Aorta (tissue), 5 donors: ENCODE measurements at regions of chr1 and their contacts with region 1.

Region 1: GRCh38 chr1:47710329-47711071 is 272.7 kb downstream of the FOXD2 start:
- DNase-seq: peak; percentile 78 to 94
- ATAC-seq: peak; percentile 92
- H3K4me3 ChIP-seq: no peak overlapping the region
- H3K27ac ChIP-seq: no peak overlapping the region
- H3K4me1 ChIP-seq: no peaks in the 10 kb centered on the region
- H3K27me3 ChIP-seq: no peaks in the 10 kb centered on the region

Region 2: DNA sequence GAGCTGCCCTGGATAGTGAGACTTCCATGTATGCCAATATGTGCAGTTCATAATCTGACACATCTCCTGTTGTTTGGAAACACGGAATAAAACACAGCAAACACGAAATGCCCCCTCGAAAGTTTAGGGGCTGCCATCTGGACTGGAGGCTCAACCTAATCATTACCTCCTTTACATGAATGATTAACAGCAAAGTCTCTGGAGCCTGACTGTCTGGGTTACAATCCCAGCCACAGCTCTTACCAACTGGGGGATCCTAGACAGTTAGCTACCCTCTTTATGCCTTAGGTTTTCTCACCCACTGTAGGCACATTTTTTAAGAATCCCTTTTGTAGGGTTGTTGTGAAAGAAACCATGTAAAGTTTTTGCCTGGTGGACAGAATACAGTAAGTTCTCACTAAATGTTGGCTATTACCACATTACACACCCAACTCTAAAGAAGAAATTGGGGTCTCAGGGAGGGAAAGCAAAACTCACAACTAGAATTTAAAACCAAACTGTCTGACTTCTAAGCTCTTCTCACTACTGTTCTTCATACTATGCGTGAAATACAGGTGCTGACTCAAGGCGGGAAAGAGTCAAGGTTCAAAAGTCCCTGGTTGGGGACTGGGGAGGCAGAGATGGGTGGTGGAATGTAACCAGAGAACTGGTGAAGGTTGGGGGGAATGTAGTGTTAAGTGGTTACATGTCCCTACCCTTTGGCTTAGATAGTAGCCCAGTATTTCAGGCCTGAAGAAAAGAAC is 549.0 kb before region 1 on chr1:
- intact Hi-C with region 1: no loop called
- DNase-seq: no peak
- ATAC-seq: no peak
- H3K4me3 ChIP-seq: no peak overlapping the region
- H3K27ac ChIP-seq: no peak overlapping the region
- H3K4me1 ChIP-seq: no peaks in the 10 kb centered on the region
- H3K27me3 ChIP-seq: peaks cover 0 to 2% of the 10 kb centered on the region in 2 donors

Region 3: GRCh38 chr1:47179017-47179987 is 531.2 kb before region 1 on chr1:
- intact Hi-C with region 1: loop called (anchors 5 to 10 kb)
- DNase-seq: peak; percentile 95 to 97
- ATAC-seq: peak; percentile 87
- H3K4me3 ChIP-seq: peak overlapping the region in 1 of 2 donors; percentile 17
- H3K27ac ChIP-seq: no peak overlapping the region
- H3K4me1 ChIP-seq: no peaks in the 10 kb centered on the region
- H3K27me3 ChIP-seq: no peaks in the 10 kb centered on the region

Region 4: DNA sequence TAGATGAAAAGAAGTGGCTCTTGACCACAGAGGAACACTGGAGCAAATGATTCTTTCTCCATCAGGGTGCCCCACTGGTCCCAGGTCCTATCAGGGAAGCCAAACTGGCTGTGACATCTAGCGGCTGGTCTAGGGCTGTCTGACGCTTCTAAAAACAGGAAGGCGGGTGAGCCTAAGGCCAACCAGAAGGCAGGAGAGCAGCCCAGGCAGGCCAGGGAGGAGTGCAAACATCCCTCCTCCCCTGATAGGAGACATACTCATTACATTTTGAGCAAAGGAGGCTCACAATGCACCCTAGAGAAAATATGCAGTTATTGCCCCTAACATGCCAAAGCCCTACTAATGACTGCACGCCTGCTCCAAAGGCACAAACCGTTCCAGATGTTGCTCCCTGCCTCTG is 304.8 kb before region 1 on chr1:
- intact Hi-C with region 1: no loop called
- DNase-seq: no peak
- ATAC-seq: no peak
- H3K4me3 ChIP-seq: no peak overlapping the region
- H3K27ac ChIP-seq: no peak overlapping the region
- H3K4me1 ChIP-seq: no peaks in the 10 kb centered on the region
- H3K27me3 ChIP-seq: no peaks in the 10 kb centered on the region

Region 5: DNA sequence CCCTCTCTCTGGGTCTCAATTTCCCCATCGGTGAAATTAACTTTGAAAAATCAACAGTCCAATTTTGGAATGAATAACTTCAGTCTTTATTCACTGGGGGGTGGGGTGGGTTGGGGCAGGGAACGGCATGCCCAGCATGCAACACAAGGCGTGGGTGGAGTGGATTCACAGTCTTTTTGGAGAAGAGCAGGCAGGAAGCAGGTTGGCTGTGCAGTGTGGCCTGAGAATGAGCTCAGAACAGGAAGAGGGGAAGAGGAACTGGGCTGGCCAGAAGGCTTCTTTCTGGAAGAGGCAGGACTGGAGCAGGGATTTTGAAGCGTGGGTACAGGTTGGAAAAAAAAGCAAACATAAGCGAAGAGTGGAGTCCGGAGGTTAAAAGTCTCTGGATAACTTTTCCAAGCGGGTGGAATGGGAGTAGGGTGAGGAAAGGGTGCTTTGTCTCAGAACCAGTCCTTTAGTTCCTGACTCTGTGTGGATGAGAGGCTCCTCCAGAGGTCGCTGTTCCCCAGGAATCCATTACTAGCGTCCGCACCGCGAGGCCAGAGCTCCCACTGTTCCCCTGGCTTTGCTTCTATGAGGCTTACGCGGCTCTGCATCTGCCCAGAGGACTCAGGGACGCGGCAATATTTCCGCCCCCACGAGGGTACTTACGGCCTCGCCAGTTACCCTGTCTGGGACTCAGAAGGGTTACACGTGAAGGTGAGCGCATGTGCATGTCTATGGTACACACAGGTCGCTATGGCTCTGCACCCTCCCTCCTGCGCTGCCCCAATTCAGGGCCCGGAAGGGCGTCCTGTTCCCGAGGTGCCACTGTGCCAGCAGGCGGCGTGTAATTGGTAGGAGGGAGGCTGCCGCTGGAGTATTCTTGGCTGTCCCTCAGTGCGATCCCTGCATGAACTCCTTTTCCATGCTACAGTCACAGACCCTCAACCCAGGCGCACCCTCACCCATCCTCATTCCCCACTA is 278.1 kb before region 1 on chr1:
- intact Hi-C with region 1: loop called (anchors 1 kb)
- DNase-seq: peak; percentile 87 to 91
- ATAC-seq: peak; percentile 75
- H3K4me3 ChIP-seq: no peak overlapping the region
- H3K27ac ChIP-seq: no peak overlapping the region
- H3K4me1 ChIP-seq: no peaks in the 10 kb centered on the region
- H3K27me3 ChIP-seq: no peaks in the 10 kb centered on the region

Region 6: DNA sequence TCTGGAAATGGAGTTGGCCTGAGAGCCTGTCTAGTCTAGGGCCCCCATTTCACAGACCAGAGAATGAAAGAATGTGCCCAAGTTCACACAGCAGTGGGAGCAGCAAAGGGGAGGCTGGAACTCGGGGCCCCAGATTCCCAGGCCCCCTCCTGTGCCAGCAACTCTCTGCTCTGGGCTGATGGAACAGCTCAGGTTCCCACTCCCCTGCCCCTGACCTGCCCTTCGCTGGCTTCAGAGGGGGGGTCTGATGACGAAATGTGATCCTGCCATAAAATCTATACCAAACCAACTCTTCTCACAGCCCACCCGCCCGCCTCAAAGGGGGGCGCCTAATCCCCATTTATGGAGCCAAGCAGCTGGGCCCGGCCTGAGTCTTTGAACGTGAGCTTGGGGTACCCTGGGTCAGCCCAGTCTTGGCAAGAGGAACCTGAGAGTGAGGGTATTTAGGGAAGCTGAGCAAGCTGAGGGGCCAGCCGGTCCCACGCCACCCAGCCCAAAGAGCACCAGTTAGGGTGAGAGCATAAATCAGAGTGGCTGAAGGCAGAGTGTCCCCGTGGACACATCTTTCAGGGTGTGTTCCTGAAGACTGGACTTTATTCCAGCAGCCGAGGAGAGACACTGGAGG is 207.6 kb before region 1 on chr1:
- intact Hi-C with region 1: loop called (anchors 2 to 5 kb)
- DNase-seq: no peak
- ATAC-seq: no peak
- H3K4me3 ChIP-seq: no peak overlapping the region
- H3K27ac ChIP-seq: no peak overlapping the region
- H3K4me1 ChIP-seq: no peaks in the 10 kb centered on the region
- H3K27me3 ChIP-seq: no peaks in the 10 kb centered on the region

Region 7: GRCh38 chr1:47521034-47521881 is 189.2 kb before region 1 on chr1:
- intact Hi-C with region 1: loop called (anchors 5 kb)
- DNase-seq: peak; percentile 82 to 88
- ATAC-seq: peak; percentile 78
- H3K4me3 ChIP-seq: no peak overlapping the region
- H3K27ac ChIP-seq: peak overlapping the region in 1 of 2 donors; percentile 38
- H3K4me1 ChIP-seq: peaks cover 0 to 3% of the 10 kb centered on the region in 2 donors
- H3K27me3 ChIP-seq: no peaks in the 10 kb centered on the region

Region 8: GRCh38 chr1:47656719-47657685 is 53.5 kb before region 1 on chr1:
- intact Hi-C with region 1: loop called in 1 of 2 experiments (anchors 5 kb)
- DNase-seq: peak; percentile 92 to 93
- ATAC-seq: peak; percentile 91
- H3K4me3 ChIP-seq: no peak overlapping the region
- H3K27ac ChIP-seq: peak overlapping the region; percentile 99 to 100
- H3K4me1 ChIP-seq: peaks cover 2 to 10% of the 10 kb centered on the region in 2 donors
- H3K27me3 ChIP-seq: no peaks in the 10 kb centered on the region

Region 9: GRCh38 chr1:47805921-47806361 is 95.4 kb after region 1 on chr1:
- intact Hi-C with region 1: no loop called
- DNase-seq: no peak
- ATAC-seq: no peak
- H3K4me3 ChIP-seq: no peak overlapping the region
- H3K27ac ChIP-seq: no peak overlapping the region
- H3K4me1 ChIP-seq: peaks cover 0 to 3% of the 10 kb centered on the region in 2 donors
- H3K27me3 ChIP-seq: no peaks in the 10 kb centered on the region